Activated CD4-positive, alpha-beta T cell treated with anti-CD3 and anti-CD28 coated beads for 36 hours (primary cell): ENCODE measurements at regions of chr11 and their contacts with region 1.

Region 1: DNA sequence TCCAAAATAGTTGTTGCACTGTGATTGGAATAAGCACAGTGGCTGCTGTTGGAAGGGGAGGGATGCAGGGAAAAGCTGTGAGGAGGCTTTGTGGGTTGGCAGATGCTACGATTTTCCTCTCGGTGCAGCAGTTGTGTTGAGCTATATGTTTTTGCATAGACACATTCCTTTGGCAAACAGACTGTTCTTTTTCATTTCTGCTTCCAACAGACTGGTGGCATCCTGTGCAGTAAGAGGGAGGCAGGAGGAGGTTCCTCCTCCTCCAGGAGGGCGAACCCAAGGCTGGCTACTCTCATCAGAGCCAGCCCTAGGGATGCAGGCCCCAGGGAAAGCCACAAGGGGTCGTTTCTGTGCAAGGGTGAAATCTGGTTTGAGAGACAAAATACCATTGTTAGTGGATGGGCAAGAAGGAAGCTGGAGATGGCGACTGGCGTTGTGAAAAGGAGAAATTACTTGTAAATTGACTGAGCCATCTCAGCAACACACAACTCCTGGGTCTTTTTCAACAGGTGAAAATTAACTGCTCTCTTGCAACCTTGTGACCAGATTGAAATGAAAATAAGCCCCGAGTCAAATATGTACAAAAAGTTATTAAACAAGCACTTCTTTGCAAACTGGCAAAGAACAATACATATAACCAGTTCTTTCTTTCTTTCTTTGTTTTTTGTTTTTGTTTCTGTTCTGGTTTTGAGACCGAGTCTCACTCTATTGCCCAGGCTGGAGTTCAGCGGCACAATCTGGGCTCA is 26.5 kb upstream of the UBASH3B start:
- DNase-seq: peak; percentile 71
- ATAC-seq: peak; percentile 79
- H3K4me3 Mint-ChIP-seq: no peak overlapping the region
- H3K27ac Mint-ChIP-seq: no peak overlapping the region
- H3K4me1 Mint-ChIP-seq: peaks cover 3% of the 10 kb centered on the region
- H3K27me3 Mint-ChIP-seq: peaks cover 2% of the 10 kb centered on the region

Region 2: DNA sequence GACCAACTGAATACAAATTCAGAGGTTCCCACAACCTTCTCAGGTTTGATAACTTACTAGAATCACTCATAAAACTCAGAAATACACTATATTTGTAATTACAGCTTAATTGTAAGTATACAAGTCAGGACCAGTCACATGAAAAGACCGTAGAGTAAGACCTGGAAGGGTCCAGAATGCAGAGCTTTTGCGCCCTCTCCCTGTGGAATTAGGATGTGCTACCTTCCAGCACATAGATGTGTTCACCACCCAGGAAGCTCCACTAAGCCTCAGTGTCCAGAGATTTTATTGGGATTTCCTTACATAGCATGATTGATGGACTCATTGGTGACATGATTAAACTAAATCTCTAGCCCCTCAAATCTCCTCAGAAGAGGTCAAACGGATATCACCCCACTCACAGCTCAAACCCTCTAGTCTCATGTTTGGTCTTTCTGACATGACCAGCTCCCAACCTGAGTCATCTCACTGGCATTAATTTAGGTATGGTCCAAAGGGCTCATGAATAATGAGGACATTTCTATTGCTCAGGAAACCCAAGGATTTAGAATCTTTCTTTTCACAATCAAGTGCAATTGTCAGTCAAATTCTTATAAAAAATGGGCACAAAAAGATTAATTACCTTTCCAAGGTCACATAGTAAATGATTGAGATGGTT is 50.7 kb before region 1 on chr11:
- CTCF ChIA-PET with region 1: interaction called, 4 read pairs
- POLR2A ChIA-PET with region 1: no interaction called
- intact Hi-C with region 1: loop called in 1 of 2 experiments (anchors 2 kb)
- DNase-seq: peak; percentile 16
- ATAC-seq: no peak
- H3K4me3 Mint-ChIP-seq: no peak overlapping the region
- H3K27ac Mint-ChIP-seq: no peak overlapping the region
- H3K4me1 Mint-ChIP-seq: peaks cover 8% of the 10 kb centered on the region
- H3K27me3 Mint-ChIP-seq: no peaks in the 10 kb centered on the region